CD8-positive, alpha-beta T cell (primary cell): ENCODE measurements at regions of chr16 and their contacts with region 1.

Region 1: DNA sequence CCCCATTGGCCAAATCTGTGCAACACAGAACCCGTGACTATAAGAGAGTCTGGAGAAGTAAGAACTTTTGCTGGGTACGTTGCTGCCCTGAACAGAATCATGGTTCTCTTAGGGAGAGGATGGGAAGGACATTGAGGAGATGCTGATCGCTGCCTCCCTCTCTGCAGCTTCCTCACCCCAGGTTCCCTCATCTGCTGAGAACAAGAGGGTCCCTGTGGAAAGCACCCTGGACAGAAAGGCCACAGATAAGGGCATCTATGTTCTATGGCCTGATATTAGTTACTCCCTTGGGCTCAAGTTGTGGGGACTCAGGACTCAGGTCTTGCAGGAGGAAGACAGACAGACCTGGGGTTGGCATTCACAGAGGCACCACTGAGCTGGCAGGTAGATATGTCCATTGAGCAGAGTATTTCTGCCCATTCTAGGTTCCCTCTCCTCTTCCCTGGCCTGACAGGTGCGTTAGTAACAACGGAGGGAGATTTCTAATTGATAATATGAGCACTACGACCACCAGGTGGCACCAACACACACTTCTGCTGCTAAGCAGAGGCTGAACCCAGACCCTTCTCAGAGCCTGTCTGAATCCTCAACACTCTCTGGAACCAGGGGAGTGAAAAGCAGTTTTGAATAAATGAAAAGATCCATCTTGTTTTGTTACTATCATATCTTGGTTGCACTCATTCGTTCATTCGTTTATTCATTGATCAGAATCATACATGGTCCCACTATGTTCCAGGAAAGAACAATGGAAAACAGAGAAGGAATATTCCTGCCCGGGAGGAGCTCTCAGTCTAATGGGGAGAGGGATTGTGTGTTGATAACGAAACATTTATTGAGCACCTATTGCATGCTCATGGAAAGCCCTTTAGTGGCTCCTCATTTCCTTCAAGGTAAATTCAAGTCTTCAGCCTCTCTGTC is 56.4 kb downstream of the SLC6A2 start:
- DNase-seq: peak in 8 of 9 experiments; percentile 36 to 70 (median 59)
- ATAC-seq: no peak
- H3K4me3 ChIP-seq: no peak overlapping the region
- H3K4me3 Mint-ChIP-seq: no peak overlapping the region
- H3K27ac ChIP-seq: no peak overlapping the region
- H3K27ac Mint-ChIP-seq: no peak overlapping the region
- H3K4me1 ChIP-seq: no peaks in the 10 kb centered on the region
- H3K4me1 Mint-ChIP-seq: no peaks in the 10 kb centered on the region
- H3K27me3 ChIP-seq: no peaks in the 10 kb centered on the region
- H3K27me3 Mint-ChIP-seq: peaks cover 25% of the 10 kb centered on the region
- CTCF ChIP-seq: peak; percentile 67

Region 2: DNA sequence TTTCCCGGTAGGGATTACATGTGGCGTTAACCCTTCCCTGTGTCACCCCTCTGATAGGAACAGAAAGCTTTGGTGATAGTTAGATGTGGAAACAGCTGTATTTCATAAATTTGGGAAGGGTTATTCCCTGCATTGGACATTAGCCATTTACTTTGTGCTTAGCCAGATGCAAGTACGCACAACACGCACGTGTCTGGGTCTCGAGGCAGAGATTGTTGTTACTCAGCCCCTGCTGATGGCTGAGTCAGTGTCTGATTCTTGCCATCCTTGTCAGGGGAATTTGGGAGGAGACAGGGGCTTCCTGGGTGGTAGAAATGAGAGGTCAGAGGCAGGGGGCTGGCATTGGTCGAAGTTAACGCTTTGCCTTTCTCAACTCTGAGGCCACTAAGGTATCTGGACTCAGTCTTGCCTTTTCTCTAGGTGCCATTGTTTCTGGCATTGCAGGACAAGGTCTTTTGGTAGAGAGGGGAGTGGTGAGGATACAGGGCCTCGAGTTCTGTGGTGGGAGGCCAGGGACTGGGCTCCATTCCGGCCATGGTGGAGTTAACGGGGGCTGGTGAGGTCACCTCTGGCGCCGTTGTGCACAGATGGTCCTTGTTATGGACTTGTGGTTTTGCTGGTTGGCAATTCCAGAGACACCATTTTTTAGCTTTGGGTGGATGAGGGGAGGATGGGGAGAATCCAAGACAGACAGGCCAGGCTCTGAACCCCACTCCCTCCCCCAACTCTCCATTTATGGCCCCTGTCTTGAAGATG is 225.0 kb before region 1 on chr16:
- CTCF ChIA-PET with region 1: no interaction called
- POLR2A ChIA-PET with region 1: no interaction called
- intact Hi-C with region 1: no loop called
- DNase-seq: no peak
- ATAC-seq: no peak
- H3K4me3 ChIP-seq: no peak overlapping the region
- H3K4me3 Mint-ChIP-seq: no peak overlapping the region
- H3K27ac ChIP-seq: no peak overlapping the region
- H3K27ac Mint-ChIP-seq: no peak overlapping the region
- H3K4me1 ChIP-seq: no peaks in the 10 kb centered on the region
- H3K4me1 Mint-ChIP-seq: no peaks in the 10 kb centered on the region
- H3K27me3 ChIP-seq: no peaks in the 10 kb centered on the region
- H3K27me3 Mint-ChIP-seq: peaks cover 4% of the 10 kb centered on the region
- CTCF ChIP-seq: no peak

Region 3: GRCh38 chr16:55842369-55843104 is 130.3 kb after region 1 on chr16:
- CTCF ChIA-PET with region 1: interaction called, 18 read pairs
- POLR2A ChIA-PET with region 1: no interaction called
- intact Hi-C with region 1: loop called (anchors 1 kb)
- DNase-seq: peak in 5 of 9 experiments; percentile 5 to 61 (median 17)
- ATAC-seq: no peak
- H3K4me3 ChIP-seq: no peak overlapping the region
- H3K4me3 Mint-ChIP-seq: no peak overlapping the region
- H3K27ac ChIP-seq: no peak overlapping the region
- H3K27ac Mint-ChIP-seq: no peak overlapping the region
- H3K4me1 ChIP-seq: no peaks in the 10 kb centered on the region
- H3K4me1 Mint-ChIP-seq: no peaks in the 10 kb centered on the region
- H3K27me3 ChIP-seq: no peaks in the 10 kb centered on the region
- H3K27me3 Mint-ChIP-seq: peaks cover 14% of the 10 kb centered on the region
- CTCF ChIP-seq: peak; percentile 68

Region 4: DNA sequence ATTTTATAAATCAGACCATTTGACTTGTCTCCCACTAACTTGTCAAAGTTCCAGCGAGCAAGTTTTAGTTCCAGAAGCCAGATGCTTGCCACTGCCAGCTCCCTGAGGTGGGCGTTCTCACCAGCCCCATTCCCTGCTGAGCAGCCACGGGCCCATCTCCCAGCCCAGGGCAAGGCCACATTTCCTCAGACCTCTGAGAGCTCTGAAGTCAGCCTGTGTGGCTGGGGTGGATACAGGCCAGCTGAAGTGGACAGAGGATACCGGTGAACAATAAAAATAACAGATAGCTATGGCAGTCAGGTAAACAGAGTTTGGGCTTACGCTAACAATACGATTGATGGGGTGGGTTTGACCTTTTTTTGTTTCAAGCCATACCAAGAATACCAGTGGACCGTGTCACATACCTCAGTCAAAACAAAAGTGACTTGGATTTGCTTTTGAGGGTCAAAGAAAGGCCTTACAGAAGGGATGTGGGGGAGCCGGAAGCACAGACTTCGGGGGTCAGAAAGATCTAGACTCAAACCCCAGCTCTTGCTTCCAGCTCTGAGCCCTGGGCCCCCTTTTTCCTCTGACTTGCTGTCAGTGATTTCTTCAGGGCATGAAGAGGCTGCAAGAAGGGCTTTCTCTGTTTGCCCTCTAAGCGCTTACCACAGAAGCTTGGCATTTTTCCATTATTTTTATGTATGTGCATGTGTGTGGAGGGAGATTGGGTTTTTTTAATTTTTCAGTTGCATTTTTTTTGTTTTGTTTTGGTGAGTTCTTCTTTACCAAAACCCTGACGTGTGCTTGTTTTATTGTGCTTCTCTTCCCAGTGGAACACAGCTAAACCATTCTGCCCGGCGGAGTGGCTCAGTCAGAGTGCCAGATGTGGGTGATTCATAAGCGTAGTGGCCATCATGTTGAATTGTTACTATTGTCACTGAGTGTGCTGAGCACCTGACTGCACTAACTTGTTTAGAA is 589.0 kb after region 1 on chr16:
- CTCF ChIA-PET with region 1: no interaction called
- POLR2A ChIA-PET with region 1: no interaction called
- intact Hi-C with region 1: loop called in 1 of 2 experiments (anchors 5 kb)
- DNase-seq: no peak
- ATAC-seq: no peak
- H3K4me3 ChIP-seq: no peak overlapping the region
- H3K4me3 Mint-ChIP-seq: no peak overlapping the region
- H3K27ac ChIP-seq: no peak overlapping the region
- H3K27ac Mint-ChIP-seq: no peak overlapping the region
- H3K4me1 ChIP-seq: no peaks in the 10 kb centered on the region
- H3K4me1 Mint-ChIP-seq: no peaks in the 10 kb centered on the region
- H3K27me3 ChIP-seq: no peaks in the 10 kb centered on the region
- H3K27me3 Mint-ChIP-seq: peaks cover 8% of the 10 kb centered on the region
- CTCF ChIP-seq: no peak